SK-N-SH (cell line): ENCODE measurements at regions of chr11 and their contacts with region 1.

Region 1: GRCh38 chr11:43504316-43504950 is 145.7 kb downstream of the TTC17 start:
- DNase-seq: peak; percentile 31
- H3K4me3 ChIP-seq: no peak overlapping the region
- H3K27ac ChIP-seq: no peak overlapping the region
- H3K4me1 ChIP-seq: peaks cover 4 to 8% of the 10 kb centered on the region in 2 experiments; a peak in 2 of 4 replicates
- H3K27me3 ChIP-seq: no peaks in the 10 kb centered on the region
- CTCF ChIP-seq: peak; percentile 39
- EP300 ChIP-seq: no peak
- RAD21 ChIP-seq: peak; percentile 67

Region 2: GRCh38 chr11:43341159-43341558 is 163.3 kb before region 1 on chr11:
- CTCF ChIA-PET with region 1: no interaction called
- POLR2A ChIA-PET with region 1: no interaction called
- DNase-seq: no peak
- H3K4me3 ChIP-seq: no peak overlapping the region
- H3K27ac ChIP-seq: no peak overlapping the region
- H3K4me1 ChIP-seq: no peaks in the 10 kb centered on the region
- H3K27me3 ChIP-seq: no peaks in the 10 kb centered on the region
- CTCF ChIP-seq: no peak
- EP300 ChIP-seq: no peak
- RAD21 ChIP-seq: no peak

Region 3: DNA sequence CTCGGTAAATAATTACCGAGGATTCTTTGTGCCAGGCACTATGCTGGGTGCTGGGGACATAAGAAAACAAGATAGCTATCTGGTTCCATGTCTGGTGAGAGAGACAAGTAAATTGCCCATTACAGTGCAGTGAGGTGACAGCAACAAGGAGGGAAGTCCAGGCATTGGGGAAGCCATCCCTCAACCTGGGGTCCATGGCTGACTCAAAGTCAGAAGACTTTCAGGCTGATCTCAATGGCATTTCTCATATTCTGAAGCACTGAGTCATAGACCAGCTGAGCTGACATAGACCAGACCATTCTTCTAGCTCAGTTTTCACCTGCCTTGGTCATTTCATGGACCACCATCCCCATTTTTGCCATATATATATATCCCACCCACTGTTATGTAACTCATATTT is 13.1 kb after region 1 on chr11:
- CTCF ChIA-PET with region 1: interaction called, 12 read pairs
- POLR2A ChIA-PET with region 1: no interaction called
- DNase-seq: no peak
- H3K4me3 ChIP-seq: no peak overlapping the region
- H3K27ac ChIP-seq: no peak overlapping the region
- H3K4me1 ChIP-seq: no peaks in the 10 kb centered on the region
- H3K27me3 ChIP-seq: no peaks in the 10 kb centered on the region; the same call in 1 of the 2 replicates
- CTCF ChIP-seq: no peak
- EP300 ChIP-seq: no peak
- RAD21 ChIP-seq: no peak

Region 4: GRCh38 chr11:43567396-43567975 is 63.1 kb after region 1 on chr11:
- CTCF ChIA-PET with region 1: interaction called, 34 read pairs
- POLR2A ChIA-PET with region 1: no interaction called
- DNase-seq: peak; percentile 64
- H3K4me3 ChIP-seq: no peak overlapping the region
- H3K27ac ChIP-seq: no peak overlapping the region
- H3K4me1 ChIP-seq: no peaks in the 10 kb centered on the region
- H3K27me3 ChIP-seq: peaks cover under 1% of the 10 kb centered on the region; the same call in 1 of the 2 replicates
- CTCF ChIP-seq: peak; percentile 76
- EP300 ChIP-seq: no peak
- RAD21 ChIP-seq: peak; percentile 59

Region 5: GRCh38 chr11:43576803-43577521 is 72.5 kb after region 1 on chr11:
- CTCF ChIA-PET with region 1: interaction called, 20 read pairs
- POLR2A ChIA-PET with region 1: no interaction called
- DNase-seq: peak; percentile 71
- H3K4me3 ChIP-seq: peak overlapping the region; percentile 41 to 61; a peak in 3 of 4 replicates
- H3K27ac ChIP-seq: no peak overlapping the region
- H3K4me1 ChIP-seq: peaks cover 21 to 42% of the 10 kb centered on the region in 2 experiments; a peak in 3 of 4 replicates
- H3K27me3 ChIP-seq: peaks cover 81% of the 10 kb centered on the region
- CTCF ChIP-seq: peak; percentile 39
- EP300 ChIP-seq: no peak
- RAD21 ChIP-seq: no peak

Region 6: GRCh38 chr11:43708776-43709175 is 204.3 kb after region 1 on chr11:
- CTCF ChIA-PET with region 1: interaction called, 10 read pairs
- POLR2A ChIA-PET with region 1: no interaction called
- DNase-seq: peak; percentile 30
- H3K4me3 ChIP-seq: no peak overlapping the region
- H3K27ac ChIP-seq: no peak overlapping the region
- H3K4me1 ChIP-seq: no peaks in the 10 kb centered on the region
- H3K27me3 ChIP-seq: no peaks in the 10 kb centered on the region
- CTCF ChIP-seq: peak; percentile 38
- EP300 ChIP-seq: no peak
- RAD21 ChIP-seq: peak; percentile 66

Region 7: GRCh38 chr11:44243595-44244343 is 739.3 kb after region 1 on chr11:
- CTCF ChIA-PET with region 1: no interaction called
- POLR2A ChIA-PET with region 1: no interaction called
- DNase-seq: no peak
- H3K4me3 ChIP-seq: no peak overlapping the region
- H3K27ac ChIP-seq: peak overlapping the region; percentile 74 to 83
- H3K4me1 ChIP-seq: peaks cover 20 to 55% of the 10 kb centered on the region in 2 experiments
- H3K27me3 ChIP-seq: no peaks in the 10 kb centered on the region
- CTCF ChIP-seq: no peak
- EP300 ChIP-seq: peak in 1 of 2 experiments; percentile 87; a peak in 1 of 4 replicates
- RAD21 ChIP-seq: no peak